Activated CD4-positive, alpha-beta T cell treated with anti-CD3 and anti-CD28 coated beads for 36 hours (primary cell): ENCODE measurements at regions of chr18 and their contacts with region 1.

Region 1: GRCh38 chr18:46148810-46149209 is 44.6 kb downstream of the HAUS1 start:
- DNase-seq: peak; percentile 59
- ATAC-seq: peak; percentile 77
- H3K4me3 Mint-ChIP-seq: no peak overlapping the region
- H3K27ac Mint-ChIP-seq: no peak overlapping the region
- H3K4me1 Mint-ChIP-seq: peaks cover 23% of the 10 kb centered on the region
- H3K27me3 Mint-ChIP-seq: no peaks in the 10 kb centered on the region

Region 2: DNA sequence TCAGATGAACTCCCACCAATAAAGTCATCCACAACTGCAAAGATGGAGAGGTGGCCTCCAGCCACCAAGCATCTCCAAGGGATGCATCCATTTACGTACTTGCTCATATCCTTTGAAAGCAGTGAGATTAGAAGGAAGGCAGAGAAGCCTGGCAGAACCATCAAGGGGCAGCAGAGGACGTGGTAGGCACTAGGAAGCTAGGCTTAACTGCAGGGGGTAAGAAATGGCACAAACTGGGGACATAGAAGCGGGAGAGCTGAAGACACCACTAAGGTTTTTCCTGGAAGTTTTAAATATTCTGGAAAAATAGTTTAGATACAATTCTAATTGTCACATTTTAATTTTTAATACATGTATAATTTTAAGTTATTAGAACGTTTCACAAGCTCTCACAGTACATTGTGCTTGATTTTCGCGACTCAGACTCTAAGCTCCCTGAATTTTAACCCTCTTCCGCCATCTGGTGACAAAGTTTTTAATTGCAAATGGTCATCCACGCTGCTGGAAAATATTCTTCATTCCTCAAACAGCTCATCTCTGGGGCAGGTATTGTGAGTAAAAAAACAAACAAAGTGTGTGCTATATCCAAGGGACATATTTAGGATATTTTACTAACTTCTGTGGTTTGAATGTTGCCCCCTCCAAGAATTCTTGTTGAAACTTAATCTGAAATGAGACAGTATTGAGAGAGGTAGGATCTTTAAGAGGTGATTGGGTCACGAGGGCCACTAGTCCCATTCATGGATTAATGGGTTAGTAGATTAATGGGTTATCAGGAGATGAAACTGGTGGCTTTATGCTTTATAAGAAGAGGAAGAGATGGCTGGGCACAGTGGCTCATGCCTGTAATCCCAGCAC is 75.1 kb before region 1 on chr18:
- CTCF ChIA-PET with region 1: no interaction called
- POLR2A ChIA-PET with region 1: no interaction called
- intact Hi-C with region 1: no loop called
- DNase-seq: peak; percentile 68
- ATAC-seq: peak; percentile 60
- H3K4me3 Mint-ChIP-seq: no peak overlapping the region
- H3K27ac Mint-ChIP-seq: no peak overlapping the region
- H3K4me1 Mint-ChIP-seq: peaks cover 36% of the 10 kb centered on the region
- H3K27me3 Mint-ChIP-seq: no peaks in the 10 kb centered on the region

Region 3: DNA sequence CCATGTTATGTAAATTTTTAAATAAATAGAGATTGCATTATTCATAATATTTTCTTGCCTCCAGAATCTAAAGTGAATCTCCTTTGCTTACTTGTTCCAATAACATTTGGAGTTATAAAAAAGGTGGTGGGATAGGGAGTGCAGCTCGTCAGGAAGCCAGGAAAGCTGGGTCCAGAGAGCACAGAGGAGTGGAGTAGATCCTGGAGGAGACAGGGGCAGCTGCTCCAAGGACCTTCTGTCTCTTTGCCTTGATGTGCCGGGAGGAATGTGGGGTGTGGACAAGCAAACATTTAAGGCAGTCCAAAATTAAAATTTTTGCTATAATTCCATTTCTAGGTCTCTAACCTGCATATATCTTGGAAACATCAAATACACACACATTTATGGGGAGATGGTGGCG is 15.3 kb before region 1 on chr18:
- CTCF ChIA-PET with region 1: interaction called, 4 read pairs
- POLR2A ChIA-PET with region 1: no interaction called
- intact Hi-C with region 1: loop called in 1 of 2 experiments (anchors 2 kb)
- DNase-seq: no peak
- ATAC-seq: no peak
- H3K4me3 Mint-ChIP-seq: no peak overlapping the region
- H3K27ac Mint-ChIP-seq: no peak overlapping the region
- H3K4me1 Mint-ChIP-seq: no peaks in the 10 kb centered on the region
- H3K27me3 Mint-ChIP-seq: no peaks in the 10 kb centered on the region

Region 4: GRCh38 chr18:46481048-46481846 is 332.4 kb after region 1 on chr18:
- CTCF ChIA-PET with region 1: interaction called, 4 read pairs
- POLR2A ChIA-PET with region 1: no interaction called
- intact Hi-C with region 1: loop called (anchors 1 to 5 kb)
- DNase-seq: peak; percentile 71
- ATAC-seq: peak; percentile 42
- H3K4me3 Mint-ChIP-seq: no peak overlapping the region
- H3K27ac Mint-ChIP-seq: no peak overlapping the region
- H3K4me1 Mint-ChIP-seq: no peaks in the 10 kb centered on the region
- H3K27me3 Mint-ChIP-seq: peaks cover 2% of the 10 kb centered on the region